Adrenal gland (tissue), 19 donors: ENCODE measurements at regions of chr22 and their contacts with region 1.

Region 1: GRCh38 chr22:37696657-37697537 is at the start of gene TRIOBP:
- DNase-seq: peak; percentile 93 to 99 (median 98)
- H3K4me3 ChIP-seq: no peak within 1 kb of the TSS
- H3K27ac ChIP-seq: peak within 1 kb of the TSS in 4 of 5 donors; percentile 4 to 70 (median 30)
- H3K4me1 ChIP-seq: peaks cover 0 to 17% of the 10 kb centered on the region in 2 donors
- H3K27me3 ChIP-seq: no peaks in the 10 kb centered on the region
- CTCF ChIP-seq: peak; percentile 21 to 59 (median 54)
- POLR2A ChIP-seq: peak in 1 of 2 donors; percentile 75
- total RNA-seq, gene TRIOBP: 42.8 to 146 (median 105) TPM

Region 2: DNA sequence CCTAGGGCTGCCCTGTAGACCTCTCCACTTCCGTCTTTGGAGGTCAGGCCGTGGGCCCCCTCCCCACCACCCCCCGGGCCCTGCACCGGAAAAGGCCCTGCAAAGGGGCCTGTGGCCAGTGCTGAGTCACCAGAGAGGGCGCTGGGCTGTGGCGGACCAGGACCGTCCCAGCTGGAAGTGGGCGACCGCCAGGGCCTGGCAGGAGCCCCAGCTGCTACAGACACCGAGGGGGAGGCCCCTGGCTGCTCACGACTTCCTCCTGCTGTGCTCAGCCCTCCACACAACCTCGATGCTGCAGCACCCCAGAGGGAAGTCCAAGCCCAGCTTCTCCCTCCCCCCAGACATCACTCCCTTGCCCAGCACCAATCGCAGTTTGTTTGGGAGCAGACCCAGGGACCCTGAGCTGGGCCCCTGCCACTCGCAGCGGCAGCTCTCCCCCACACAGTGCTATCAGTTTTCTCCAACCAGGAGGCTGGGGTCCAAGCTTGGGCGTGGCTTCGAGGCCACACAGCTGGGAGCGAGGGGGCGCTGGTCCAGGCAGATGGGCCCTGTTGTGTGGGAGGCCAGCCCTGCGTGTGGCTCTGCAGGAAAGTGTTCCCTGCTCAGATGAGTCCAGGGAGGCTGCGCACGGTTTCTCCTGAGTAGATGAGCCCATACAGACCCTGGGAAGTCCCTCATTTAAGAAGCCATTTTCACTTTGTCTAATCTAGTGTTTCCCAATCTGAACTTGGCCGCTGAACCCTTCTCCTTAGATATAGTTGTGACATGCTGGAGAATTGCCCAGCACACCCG is 63.1 kb before region 1 on chr22:
- intact Hi-C with region 1: no loop called
- DNase-seq: peak; percentile 69 to 91 (median 82)
- H3K4me3 ChIP-seq: peak overlapping the region in 1 of 4 donors; percentile 31
- H3K27ac ChIP-seq: peak overlapping the region; percentile 46 to 92 (median 74)
- H3K4me1 ChIP-seq: peaks cover 18 to 34% of the 10 kb centered on the region in 2 donors
- H3K27me3 ChIP-seq: no peaks in the 10 kb centered on the region
- CTCF ChIP-seq: peak in 2 of 6 experiments; percentile 14 to 32
- POLR2A ChIP-seq: no peak

Region 3: GRCh38 chr22:37734964-37735451 is 38.1 kb after region 1 on chr22:
- intact Hi-C with region 1: loop called in 1 of 2 experiments (anchors 5 kb)
- DNase-seq: peak in 6 of 7 donors; percentile 80 to 86 (median 83)
- H3K4me3 ChIP-seq: no peak overlapping the region
- H3K27ac ChIP-seq: peak overlapping the region in 2 of 5 donors; percentile 5 to 60
- H3K4me1 ChIP-seq: no peaks in the 10 kb centered on the region
- H3K27me3 ChIP-seq: no peaks in the 10 kb centered on the region
- CTCF ChIP-seq: peak; percentile 42 to 78 (median 64)
- POLR2A ChIP-seq: no peak

Region 4: DNA sequence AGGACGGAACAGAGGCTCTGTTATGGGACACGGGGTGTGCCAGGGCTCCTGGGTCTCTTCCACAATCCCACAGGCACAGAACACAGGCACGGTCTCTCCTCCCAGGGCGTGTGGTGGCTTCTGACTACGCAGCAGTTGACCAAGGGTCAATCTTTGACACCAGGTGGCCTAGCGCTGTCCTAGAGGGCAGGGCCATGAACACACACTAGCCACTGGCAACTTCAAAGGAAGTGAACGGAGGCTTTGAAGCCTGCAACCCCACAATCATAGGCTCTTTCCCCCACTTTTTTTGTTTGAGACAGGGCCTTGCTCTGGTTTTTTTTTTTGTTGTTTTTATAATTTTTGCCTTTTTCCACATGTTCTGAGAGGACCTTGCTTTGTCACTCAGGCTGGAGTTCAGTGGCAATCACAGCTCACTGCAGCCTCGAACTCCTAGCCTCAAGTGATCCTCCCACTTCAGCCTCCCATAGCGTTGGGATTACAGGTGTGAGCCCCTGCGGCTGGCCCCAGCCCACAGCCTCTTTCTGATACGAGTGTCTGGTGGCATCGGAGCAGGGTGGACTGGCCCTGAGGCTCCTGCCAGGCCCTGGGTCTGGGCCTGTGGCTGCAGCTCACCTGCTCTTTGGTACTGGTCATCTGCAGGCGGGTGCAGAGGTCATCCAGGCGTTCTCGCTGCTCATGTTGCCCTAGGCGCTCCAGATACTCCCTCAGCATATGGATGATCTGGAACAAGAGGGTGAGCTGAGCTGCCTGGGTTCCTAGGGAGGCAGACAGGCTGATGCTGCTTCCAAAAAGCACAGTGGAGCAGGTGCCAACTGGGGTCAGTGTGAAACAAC is 135.3 kb after region 1 on chr22:
- intact Hi-C with region 1: no loop called
- DNase-seq: no peak
- H3K4me3 ChIP-seq: no peak overlapping the region
- H3K27ac ChIP-seq: no peak overlapping the region
- H3K4me1 ChIP-seq: no peaks in the 10 kb centered on the region
- H3K27me3 ChIP-seq: no peaks in the 10 kb centered on the region
- CTCF ChIP-seq: no peak
- POLR2A ChIP-seq: no peak